ENCODE measurements at regions of chr1 and their contacts with region 1.

Region 1: DNA sequence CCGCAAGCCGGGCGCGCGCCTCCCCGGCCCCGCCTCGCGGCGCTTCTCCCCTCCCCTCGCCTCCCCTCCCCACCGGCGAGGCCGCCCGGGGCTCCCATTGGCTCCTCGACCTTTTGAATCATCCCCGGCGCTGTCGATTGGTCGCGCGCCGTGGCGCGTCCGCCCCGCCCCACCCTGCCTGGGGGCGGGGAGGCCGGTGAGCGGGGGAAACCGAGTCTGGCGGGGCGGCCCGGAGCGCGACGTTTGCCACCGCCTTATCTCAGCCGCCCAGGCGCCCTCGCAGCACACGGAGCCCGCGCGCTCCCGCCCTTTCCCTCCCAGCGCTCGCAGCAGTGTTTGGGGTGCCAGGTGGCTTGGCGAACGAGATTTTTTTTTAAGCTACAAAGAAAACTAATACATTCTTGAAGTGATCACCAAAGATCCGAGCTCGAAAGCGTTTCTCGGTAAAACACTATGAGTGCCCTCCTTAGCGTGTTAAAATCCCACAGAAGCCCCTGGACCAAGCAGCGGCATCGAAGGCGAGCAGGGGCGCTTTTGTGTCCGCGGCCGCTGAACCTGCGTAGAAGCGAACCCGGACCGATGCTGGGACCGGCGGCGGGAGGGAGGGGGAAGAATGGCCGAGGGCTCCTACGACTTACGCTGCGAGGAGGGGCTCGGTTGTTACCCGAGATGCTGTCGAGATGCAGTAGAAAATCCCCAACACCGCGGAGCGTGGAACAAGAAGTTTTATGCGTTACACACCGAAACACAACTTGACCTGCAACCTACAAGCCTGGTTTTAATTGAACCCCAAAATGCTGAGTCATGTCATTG is 436 bp upstream of the LBR start:
- DNase-seq: peak; percentile 99
- H3K4me3 Mint-ChIP-seq: peak overlapping the region; percentile 75
- H3K27ac Mint-ChIP-seq: peak overlapping the region; percentile 20
- H3K4me1 Mint-ChIP-seq: peaks cover 35% of the 10 kb centered on the region
- H3K27me3 Mint-ChIP-seq: no peaks in the 10 kb centered on the region
- CTCF ChIP-seq: no peak

Region 2: GRCh38 chr1:225209153-225209552 is 219.1 kb before region 1 on chr1:
- CTCF ChIA-PET with region 1: no interaction called
- POLR2A ChIA-PET with region 1: no interaction called
- intact Hi-C with region 1: no loop called
- DNase-seq: no peak
- H3K4me3 Mint-ChIP-seq: no peak overlapping the region
- H3K27ac Mint-ChIP-seq: no peak overlapping the region
- H3K4me1 Mint-ChIP-seq: no peaks in the 10 kb centered on the region
- H3K27me3 Mint-ChIP-seq: no peaks in the 10 kb centered on the region
- CTCF ChIP-seq: no peak

Region 3: GRCh38 chr1:225230483-225230882 is 197.8 kb before region 1 on chr1:
- CTCF ChIA-PET with region 1: no interaction called
- POLR2A ChIA-PET with region 1: no interaction called
- intact Hi-C with region 1: no loop called
- DNase-seq: no peak
- H3K4me3 Mint-ChIP-seq: no peak overlapping the region
- H3K27ac Mint-ChIP-seq: no peak overlapping the region
- H3K4me1 Mint-ChIP-seq: no peaks in the 10 kb centered on the region
- H3K27me3 Mint-ChIP-seq: no peaks in the 10 kb centered on the region
- CTCF ChIP-seq: no peak

Region 4: DNA sequence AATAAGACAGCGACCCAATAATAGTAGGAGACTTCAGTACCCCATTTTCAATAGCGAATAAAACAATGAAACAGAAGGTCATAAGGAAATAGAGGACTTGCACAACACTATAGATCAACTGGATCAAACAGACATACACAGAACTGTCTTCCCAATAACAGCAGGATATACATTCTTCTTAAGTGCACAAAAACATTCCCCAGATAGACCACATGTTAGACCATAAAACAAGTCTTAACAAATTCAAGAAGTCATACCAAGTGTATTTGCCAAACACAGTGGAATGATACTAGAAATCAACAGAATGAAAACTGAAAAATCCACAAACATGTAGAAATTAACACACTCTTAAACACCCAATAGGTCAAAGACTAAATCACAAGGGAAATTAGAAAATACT is 78.4 kb before region 1 on chr1:
- CTCF ChIA-PET with region 1: interaction called, 4 read pairs
- POLR2A ChIA-PET with region 1: interaction called, 22 read pairs
- intact Hi-C with region 1: no loop called
- DNase-seq: no peak
- H3K4me3 Mint-ChIP-seq: no peak overlapping the region
- H3K27ac Mint-ChIP-seq: peak overlapping the region; percentile 63
- H3K4me1 Mint-ChIP-seq: peaks cover 28% of the 10 kb centered on the region
- H3K27me3 Mint-ChIP-seq: no peaks in the 10 kb centered on the region
- CTCF ChIP-seq: no peak

Region 5: DNA sequence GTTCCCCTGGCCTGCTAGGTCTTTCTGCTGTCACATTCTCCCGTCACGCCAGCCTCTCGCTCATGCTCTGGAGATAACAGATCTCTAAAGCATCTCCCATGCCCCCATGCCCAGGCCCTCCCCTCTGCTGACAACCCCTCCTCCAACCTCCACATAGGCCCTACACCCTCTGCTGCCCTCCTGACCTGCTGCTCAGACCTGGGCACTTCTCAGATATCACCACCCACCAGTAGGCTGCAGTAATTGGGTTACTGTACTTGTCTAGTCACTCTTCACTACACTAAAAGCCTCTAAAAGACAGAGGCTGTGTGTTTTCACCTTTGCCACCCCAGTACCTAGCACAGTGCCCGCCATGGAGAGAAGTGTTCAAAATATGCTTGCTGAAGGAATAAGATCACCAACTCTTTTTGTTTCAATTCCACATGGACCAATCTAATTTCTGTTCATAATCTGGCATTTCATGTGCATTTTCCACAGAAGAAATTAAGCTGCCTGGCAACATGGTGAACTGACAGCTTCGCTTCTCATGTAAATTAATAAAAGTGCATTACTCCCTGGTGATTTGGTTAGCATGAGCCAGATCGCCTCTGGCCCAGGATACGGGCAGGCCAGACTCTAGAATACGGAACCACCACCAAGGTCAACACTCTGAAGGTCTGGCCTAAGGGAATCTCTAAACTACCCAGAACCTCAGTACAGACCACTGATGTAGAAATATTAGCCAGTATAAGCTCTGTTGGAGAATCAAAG is 21.1 kb before region 1 on chr1:
- CTCF ChIA-PET with region 1: interaction called, 11 read pairs
- POLR2A ChIA-PET with region 1: interaction called, 29 read pairs
- intact Hi-C with region 1: no loop called
- DNase-seq: no peak
- H3K4me3 Mint-ChIP-seq: no peak overlapping the region
- H3K27ac Mint-ChIP-seq: peak overlapping the region; percentile 67
- H3K4me1 Mint-ChIP-seq: no peaks in the 10 kb centered on the region
- H3K27me3 Mint-ChIP-seq: no peaks in the 10 kb centered on the region
- CTCF ChIP-seq: no peak

Region 6: DNA sequence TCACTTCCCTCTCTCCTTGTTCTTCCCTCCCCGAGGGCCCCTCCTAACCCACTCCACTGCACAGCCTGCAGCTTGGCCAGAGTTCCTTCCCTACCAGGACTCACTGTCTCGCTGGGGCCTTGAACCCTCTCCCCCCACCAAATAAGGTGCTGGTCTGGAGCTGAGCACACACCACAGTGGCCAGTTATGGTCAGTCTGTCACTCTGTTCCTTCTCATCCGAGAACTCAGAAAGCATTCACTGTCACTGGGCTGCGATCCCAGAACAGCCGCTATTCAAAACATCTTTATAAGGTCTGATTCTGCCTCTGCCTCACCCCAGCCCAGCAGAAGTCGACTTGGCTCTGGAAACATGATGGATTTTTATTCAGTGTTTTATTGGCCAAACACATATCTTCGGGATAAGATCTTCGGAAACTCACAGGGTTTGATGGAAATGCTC is 19.4 kb after region 1 on chr1:
- CTCF ChIA-PET with region 1: interaction called, 18 read pairs
- POLR2A ChIA-PET with region 1: interaction called, 611 read pairs
- intact Hi-C with region 1: loop called (anchors 1 kb)
- DNase-seq: no peak
- H3K4me3 Mint-ChIP-seq: no peak overlapping the region
- H3K27ac Mint-ChIP-seq: peak overlapping the region; percentile 18
- H3K4me1 Mint-ChIP-seq: peaks cover 44% of the 10 kb centered on the region
- H3K27me3 Mint-ChIP-seq: no peaks in the 10 kb centered on the region
- CTCF ChIP-seq: no peak

Region 7: GRCh38 chr1:225460737-225461562 is 32.7 kb after region 1 on chr1:
- CTCF ChIA-PET with region 1: interaction called, 8 read pairs
- POLR2A ChIA-PET with region 1: interaction called, 611 read pairs
- intact Hi-C with region 1: loop called (anchors 5 kb)
- DNase-seq: peak; percentile 84
- H3K4me3 Mint-ChIP-seq: no peak overlapping the region
- H3K27ac Mint-ChIP-seq: no peak overlapping the region
- H3K4me1 Mint-ChIP-seq: peaks cover 70% of the 10 kb centered on the region
- H3K27me3 Mint-ChIP-seq: no peaks in the 10 kb centered on the region
- CTCF ChIP-seq: no peak